Naive thymus-derived CD4-positive, alpha-beta T cell (primary cell): ENCODE measurements at regions of chr17 and their contacts with region 1.

Region 1: GRCh38 chr17:8383143-8383822 is at the start of gene RPL26:
- DNase-seq: peak; percentile 89 to 97 (median 97)
- ATAC-seq: peak; percentile 94
- H3K4me3 ChIP-seq: peak within 1 kb of the TSS; percentile 83
- H3K4me3 Mint-ChIP-seq: peak within 1 kb of the TSS; percentile 93 to 99 (median 97)
- H3K27ac ChIP-seq: peak within 1 kb of the TSS; percentile 82
- H3K27ac Mint-ChIP-seq: peak within 1 kb of the TSS; percentile 93 to 98 (median 96)
- H3K4me1 ChIP-seq: peaks cover 28 to 40% of the 10 kb centered on the region in 2 donors
- H3K4me1 Mint-ChIP-seq: peaks cover 34 to 76% (median 60%) of the 10 kb centered on the region in 7 donors
- H3K27me3 ChIP-seq: no peaks in the 10 kb centered on the region
- H3K27me3 Mint-ChIP-seq: peaks cover 0 to 2% (median 0%) of the 10 kb centered on the region in 5 donors
- total RNA-seq, gene RPL26: 2,029 to 3,298 (median 3,039) TPM

Region 2: DNA sequence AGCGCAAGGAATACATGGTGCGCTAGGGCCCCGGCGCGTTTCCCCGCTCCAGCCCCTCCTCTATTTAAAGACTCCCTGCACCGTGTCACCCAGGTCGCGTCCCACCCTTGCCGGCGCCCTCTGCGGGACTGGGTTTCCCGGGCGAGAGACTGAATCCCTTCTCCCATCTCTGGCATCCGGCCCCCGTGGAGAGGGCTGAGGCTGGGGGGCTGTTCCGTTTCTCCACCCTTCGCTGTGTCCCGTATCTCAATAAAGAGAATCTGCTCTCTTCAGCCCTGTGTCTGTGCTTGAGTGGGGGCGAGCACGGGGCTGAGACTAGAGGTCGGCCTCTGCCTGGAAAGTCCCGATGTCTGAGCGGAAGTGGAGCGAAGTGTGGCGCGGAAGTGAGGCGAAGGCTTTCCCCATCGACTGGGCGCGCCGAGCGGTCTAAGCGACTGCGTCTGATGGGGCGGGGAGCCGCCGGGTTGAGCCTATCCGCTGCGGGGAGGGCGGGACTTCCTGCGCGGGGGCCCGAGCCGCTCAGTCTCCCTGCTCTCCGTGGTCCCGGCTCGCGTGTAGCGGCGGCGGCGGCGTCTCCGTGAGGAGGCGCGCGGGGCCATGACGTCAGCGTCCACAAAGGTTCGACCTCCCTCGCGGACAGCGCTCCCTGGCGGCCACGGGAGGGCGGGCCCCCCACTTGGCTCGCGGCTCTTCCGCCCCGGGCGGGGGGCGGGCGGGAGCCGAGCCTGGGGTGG is 1368.9 kb before region 1 on chr17:
- CTCF ChIA-PET with region 1: no interaction called
- POLR2A ChIA-PET with region 1: no interaction called
- intact Hi-C with region 1: loop called in 1 of 2 experiments (anchors 10 kb)
- DNase-seq: peak; percentile 96 to 98 (median 97)
- ATAC-seq: peak; percentile 89
- H3K4me3 ChIP-seq: peak overlapping the region; percentile 97
- H3K4me3 Mint-ChIP-seq: peak overlapping the region; percentile 85 to 99 (median 97)
- H3K27ac ChIP-seq: peak overlapping the region; percentile 99
- H3K27ac Mint-ChIP-seq: peak overlapping the region; percentile 97 to 100 (median 100)
- H3K4me1 ChIP-seq: peaks cover 31 to 52% of the 10 kb centered on the region in 2 donors
- H3K4me1 Mint-ChIP-seq: peaks cover 30 to 81% (median 63%) of the 10 kb centered on the region in 7 donors
- H3K27me3 ChIP-seq: no peaks in the 10 kb centered on the region
- H3K27me3 Mint-ChIP-seq: no peaks in the 10 kb centered on the region

Region 3: DNA sequence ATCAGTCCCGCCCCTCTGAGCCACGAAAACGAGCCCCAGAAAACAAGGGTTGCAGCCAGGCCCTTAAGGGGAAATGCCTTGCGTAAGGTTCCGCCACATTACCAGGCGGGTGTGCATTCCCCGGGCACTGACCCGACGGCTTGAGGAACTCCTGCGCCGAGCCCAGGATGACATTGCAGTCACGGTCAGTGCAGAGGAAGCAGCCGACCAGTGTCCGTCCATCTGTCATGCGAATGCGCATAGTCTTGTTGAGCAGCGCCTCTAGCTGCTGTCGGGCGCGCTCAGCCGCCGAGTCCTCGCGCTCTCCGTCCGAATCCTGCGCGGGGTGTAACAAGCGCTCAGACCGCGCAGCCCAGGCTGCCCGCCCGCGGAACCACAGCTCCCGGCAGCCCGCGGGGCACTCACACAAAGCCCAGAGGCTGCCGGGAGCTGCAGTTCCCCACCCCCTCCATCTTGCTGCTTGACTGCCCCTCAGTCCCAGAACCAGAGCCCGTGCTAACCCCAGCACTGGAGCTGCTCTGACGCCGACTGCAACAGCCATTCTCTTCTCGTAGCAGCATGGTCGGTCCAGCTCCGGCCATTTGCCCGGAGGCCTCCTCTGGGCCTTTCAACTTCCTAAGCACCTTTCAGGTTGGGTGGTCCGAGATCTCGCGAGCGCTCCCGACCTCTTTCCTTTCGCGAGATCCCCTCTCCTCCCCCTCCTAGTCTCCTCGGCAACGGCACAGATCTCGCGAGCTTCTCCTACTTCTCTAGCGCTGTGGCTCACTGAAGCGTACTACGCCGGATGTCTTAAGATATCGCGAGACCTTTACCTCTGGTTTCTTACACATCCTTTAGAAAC is 526.2 kb before region 1 on chr17 and contains the start of gene NAA38:
- CTCF ChIA-PET with region 1: no interaction called
- POLR2A ChIA-PET with region 1: no interaction called
- intact Hi-C with region 1: loop called in 1 of 2 experiments (anchors 5 kb)
- DNase-seq: peak; percentile 81 to 99 (median 97)
- ATAC-seq: peak; percentile 87
- H3K4me3 ChIP-seq: peak within 1 kb of the TSS; percentile 70
- H3K4me3 Mint-ChIP-seq: no peak within 1 kb of the TSS
- H3K27ac ChIP-seq: peak within 1 kb of the TSS; percentile 83
- H3K27ac Mint-ChIP-seq: no peak within 1 kb of the TSS
- H3K4me1 ChIP-seq: peaks cover 25 to 26% of the 10 kb centered on the region in 2 donors
- H3K4me1 Mint-ChIP-seq: peaks cover 0 to 16% (median 5%) of the 10 kb centered on the region in 7 donors
- H3K27me3 ChIP-seq: no peaks in the 10 kb centered on the region
- H3K27me3 Mint-ChIP-seq: no peaks in the 10 kb centered on the region
- total RNA-seq, gene NAA38: 22.1 to 63.8 (median 24.9) TPM

Region 4: DNA sequence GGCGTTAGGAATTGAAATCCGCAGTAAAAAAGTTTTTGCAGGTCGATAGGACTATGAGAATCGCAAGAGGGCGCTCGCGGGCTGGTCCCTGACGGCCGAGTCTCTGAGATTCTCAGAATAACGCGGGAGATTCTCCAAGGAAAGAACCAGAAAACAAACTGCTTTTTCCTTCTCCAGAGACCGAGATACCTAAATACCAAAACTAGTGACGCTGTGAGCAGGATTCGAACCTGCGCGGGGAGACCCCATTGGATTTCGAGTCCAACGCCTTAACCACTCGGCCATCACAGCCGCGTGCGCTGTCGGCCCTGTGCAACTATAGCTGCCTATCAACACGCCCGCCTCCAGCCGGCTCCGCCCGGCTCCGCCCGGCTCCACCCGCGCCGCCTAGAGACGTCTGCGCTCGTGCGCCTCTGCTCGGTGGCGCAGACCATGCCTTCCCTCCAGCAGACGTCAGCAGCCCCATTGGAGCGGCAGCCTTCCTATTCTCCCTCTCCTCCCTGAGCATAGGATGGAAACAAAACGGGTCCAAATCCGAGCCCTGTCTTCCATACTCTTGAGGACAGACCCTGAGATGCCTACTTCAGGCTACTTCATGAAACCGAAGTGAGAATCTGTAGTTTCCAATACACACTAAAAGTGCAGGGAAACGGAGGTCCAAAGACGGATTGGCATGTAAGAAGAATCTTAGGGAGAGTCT is 244.5 kb before region 1 on chr17:
- CTCF ChIA-PET with region 1: no interaction called
- POLR2A ChIA-PET with region 1: no interaction called
- intact Hi-C with region 1: loop called in 1 of 2 experiments (anchors 1 kb)
- DNase-seq: peak; percentile 93 to 99 (median 98)
- ATAC-seq: peak; percentile 90
- H3K4me3 ChIP-seq: peak overlapping the region; percentile 76
- H3K4me3 Mint-ChIP-seq: no peak overlapping the region
- H3K27ac ChIP-seq: peak overlapping the region; percentile 84
- H3K27ac Mint-ChIP-seq: no peak overlapping the region
- H3K4me1 ChIP-seq: peaks cover 8 to 17% of the 10 kb centered on the region in 2 donors
- H3K4me1 Mint-ChIP-seq: peaks cover 0 to 5% (median 0%) of the 10 kb centered on the region in 7 donors
- H3K27me3 ChIP-seq: no peaks in the 10 kb centered on the region
- H3K27me3 Mint-ChIP-seq: peaks cover 0 to 11% (median 0%) of the 10 kb centered on the region in 5 donors

Region 5: GRCh38 chr17:8248751-8249607 is 134.3 kb before region 1 on chr17 and contains the start of gene PFAS:
- CTCF ChIA-PET with region 1: no interaction called
- POLR2A ChIA-PET with region 1: interaction called, 3 read pairs
- intact Hi-C with region 1: loop called (anchors 1 to 2 kb)
- DNase-seq: peak; percentile 91 to 98 (median 94)
- ATAC-seq: peak; percentile 64
- H3K4me3 ChIP-seq: peak within 1 kb of the TSS; percentile 94
- H3K4me3 Mint-ChIP-seq: peak within 1 kb of the TSS; percentile 92 to 100 (median 99)
- H3K27ac ChIP-seq: peak within 1 kb of the TSS; percentile 100
- H3K27ac Mint-ChIP-seq: peak within 1 kb of the TSS; percentile 97 to 100 (median 100)
- H3K4me1 ChIP-seq: peaks cover 28 to 35% of the 10 kb centered on the region in 2 donors
- H3K4me1 Mint-ChIP-seq: peaks cover 30 to 56% (median 50%) of the 10 kb centered on the region in 7 donors
- H3K27me3 ChIP-seq: no peaks in the 10 kb centered on the region
- H3K27me3 Mint-ChIP-seq: no peaks in the 10 kb centered on the region
- total RNA-seq, gene PFAS: 31.6 to 68.9 (median 31.9) TPM

Region 6: GRCh38 chr17:8435245-8436168 is 52.2 kb after region 1 on chr17 and contains the start of gene NDEL1:
- CTCF ChIA-PET with region 1: interaction called, 3 read pairs
- POLR2A ChIA-PET with region 1: interaction called, 12 read pairs
- intact Hi-C with region 1: loop called (anchors 1 kb)
- DNase-seq: peak; percentile 97 to 99 (median 99)
- ATAC-seq: peak; percentile 95
- H3K4me3 ChIP-seq: peak within 1 kb of the TSS; percentile 81
- H3K4me3 Mint-ChIP-seq: peak within 1 kb of the TSS; percentile 94 to 99 (median 96)
- H3K27ac ChIP-seq: peak within 1 kb of the TSS; percentile 100
- H3K27ac Mint-ChIP-seq: peak within 1 kb of the TSS; percentile 96 to 100 (median 98)
- H3K4me1 ChIP-seq: peaks cover 10 to 22% of the 10 kb centered on the region in 2 donors
- H3K4me1 Mint-ChIP-seq: peaks cover 9 to 46% (median 37%) of the 10 kb centered on the region in 7 donors
- H3K27me3 ChIP-seq: no peaks in the 10 kb centered on the region
- H3K27me3 Mint-ChIP-seq: no peaks in the 10 kb centered on the region
- total RNA-seq, gene NDEL1: 72.6 to 274 (median 116) TPM

Region 7: GRCh38 chr17:8900626-8901585 is 517.6 kb after region 1 on chr17:
- CTCF ChIA-PET with region 1: no interaction called
- POLR2A ChIA-PET with region 1: no interaction called
- intact Hi-C with region 1: loop called in 1 of 2 experiments (anchors 1 kb)
- DNase-seq: peak in 8 of 9 donors; percentile 5 to 49 (median 33)
- ATAC-seq: no peak
- H3K4me3 ChIP-seq: no peak overlapping the region
- H3K4me3 Mint-ChIP-seq: peak overlapping the region; percentile 12 to 83 (median 64)
- H3K27ac ChIP-seq: peak overlapping the region; percentile 80
- H3K27ac Mint-ChIP-seq: peak overlapping the region in 8 of 9 donors; percentile 78 to 99 (median 96)
- H3K4me1 ChIP-seq: peaks cover 45 to 58% of the 10 kb centered on the region in 2 donors
- H3K4me1 Mint-ChIP-seq: peaks cover 52 to 78% (median 66%) of the 10 kb centered on the region in 7 donors
- H3K27me3 ChIP-seq: no peaks in the 10 kb centered on the region
- H3K27me3 Mint-ChIP-seq: no peaks in the 10 kb centered on the region